Endothelial cell of umbilical vein (primary cell): ENCODE measurements at regions of chr12 and their contacts with region 1.

Region 1: GRCh38 chr12:76083904-76084862 is at the start of gene NAP1L1:
- DNase-seq: peak; percentile 97
- H3K4me3 ChIP-seq: peak within 1 kb of the TSS; percentile 76 to 99 (median 93)
- H3K27ac ChIP-seq: peak within 1 kb of the TSS; percentile 92
- H3K4me1 ChIP-seq: peaks cover 38% of the 10 kb centered on the region
- H3K27me3 ChIP-seq: no peaks in the 10 kb centered on the region
- CTCF ChIP-seq: peak in 1 of 2 donors; percentile 7
- POLR2A ChIP-seq: peak; percentile 87
- total RNA-seq, gene NAP1L1: 649 and 665 TPM in 2 replicates

Region 2: GRCh38 chr12:76049575-76050251 is 34.5 kb before region 1 on chr12:
- CTCF ChIA-PET with region 1: interaction called, 3 read pairs
- POLR2A ChIA-PET with region 1: no interaction called
- dilution Hi-C with region 1: no loop called
- intact Hi-C with region 1: loop called (anchors 2 kb)
- DNase-seq: no peak
- H3K4me3 ChIP-seq: no peak overlapping the region
- H3K27ac ChIP-seq: no peak overlapping the region
- H3K4me1 ChIP-seq: no peaks in the 10 kb centered on the region
- H3K27me3 ChIP-seq: no peaks in the 10 kb centered on the region
- CTCF ChIP-seq: no peak
- POLR2A ChIP-seq: no peak

Region 3: GRCh38 chr12:76060111-76060510 is 24.1 kb before region 1 on chr12:
- CTCF ChIA-PET with region 1: no interaction called
- POLR2A ChIA-PET with region 1: no interaction called
- dilution Hi-C with region 1: no loop called
- intact Hi-C with region 1: no loop called
- DNase-seq: no peak
- H3K4me3 ChIP-seq: no peak overlapping the region
- H3K27ac ChIP-seq: no peak overlapping the region
- H3K4me1 ChIP-seq: no peaks in the 10 kb centered on the region
- H3K27me3 ChIP-seq: no peaks in the 10 kb centered on the region
- CTCF ChIP-seq: no peak
- POLR2A ChIP-seq: no peak

Region 4: DNA sequence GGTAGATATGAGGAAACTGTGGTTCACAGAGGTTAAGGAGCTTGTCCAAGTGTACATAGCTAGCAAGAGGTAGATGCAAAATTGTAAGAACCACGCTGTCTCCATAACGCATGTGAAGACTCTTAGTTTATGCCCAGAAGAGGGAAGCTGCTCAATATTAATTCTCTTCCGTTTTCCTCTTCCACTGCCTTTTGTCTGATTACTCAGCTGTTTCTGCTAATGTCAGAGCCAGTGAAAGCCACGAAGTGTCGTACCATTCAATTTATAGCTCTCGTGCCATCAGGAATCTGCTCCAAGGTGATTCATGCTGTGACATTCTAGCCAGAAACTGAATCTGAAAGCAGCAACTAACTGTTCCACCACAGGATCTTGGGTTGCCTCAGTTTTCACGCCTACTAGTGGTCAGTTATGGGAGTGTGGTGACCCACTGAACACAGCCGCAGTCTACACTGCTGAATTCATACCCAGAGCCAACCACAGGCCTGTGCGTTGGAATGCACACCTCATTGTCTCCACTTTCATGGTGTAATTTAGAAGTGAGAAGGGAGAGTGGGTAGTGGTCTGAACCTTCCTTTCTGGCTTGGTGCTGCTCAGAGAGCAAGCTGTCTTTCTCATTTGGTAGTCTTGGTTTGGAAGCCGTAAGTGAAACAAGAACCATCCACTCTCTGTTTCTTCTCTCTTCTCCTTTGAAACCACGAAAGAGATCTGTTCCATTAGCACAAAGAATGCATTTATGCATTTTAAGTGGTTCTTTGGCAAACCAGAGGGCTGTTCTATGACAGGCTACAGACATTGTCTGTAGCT is 74.5 kb after region 1 on chr12:
- CTCF ChIA-PET with region 1: interaction called, 7 read pairs
- POLR2A ChIA-PET with region 1: no interaction called
- dilution Hi-C with region 1: no loop called
- intact Hi-C with region 1: loop called (anchors 1 kb)
- DNase-seq: peak; percentile 78
- H3K4me3 ChIP-seq: no peak overlapping the region
- H3K27ac ChIP-seq: no peak overlapping the region
- H3K4me1 ChIP-seq: peaks cover 4% of the 10 kb centered on the region
- H3K27me3 ChIP-seq: no peaks in the 10 kb centered on the region
- CTCF ChIP-seq: peak; percentile 74 to 77
- POLR2A ChIP-seq: no peak

Region 5: DNA sequence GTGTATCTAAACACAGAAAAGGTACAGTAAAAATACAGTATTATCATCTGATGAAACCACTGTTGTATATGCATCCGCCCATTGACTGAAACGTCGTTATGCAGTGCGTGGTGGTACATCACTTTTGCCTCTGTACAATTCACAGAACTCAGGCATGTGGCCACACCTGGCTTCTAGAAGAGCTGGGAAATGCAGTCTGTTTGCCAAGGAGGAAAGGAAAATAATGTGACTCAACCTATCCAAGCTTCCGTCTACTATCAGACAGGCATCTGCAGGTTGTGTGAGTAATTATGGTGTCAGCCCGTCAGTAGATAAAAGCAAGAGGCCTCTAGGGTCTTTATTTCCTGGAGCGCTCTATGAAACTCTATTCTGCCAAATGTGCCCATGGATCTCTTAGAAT is 152.4 kb after region 1 on chr12:
- CTCF ChIA-PET with region 1: no interaction called
- POLR2A ChIA-PET with region 1: no interaction called
- dilution Hi-C with region 1: no loop called
- intact Hi-C with region 1: loop called (anchors 1 kb)
- DNase-seq: peak; percentile 82
- H3K4me3 ChIP-seq: no peak overlapping the region
- H3K27ac ChIP-seq: peak overlapping the region; percentile 72
- H3K4me1 ChIP-seq: peaks cover 17% of the 10 kb centered on the region
- H3K27me3 ChIP-seq: no peaks in the 10 kb centered on the region
- CTCF ChIP-seq: no peak
- POLR2A ChIP-seq: peak; percentile 55

Region 6: GRCh38 chr12:76277480-76277879 is 193.3 kb after region 1 on chr12:
- CTCF ChIA-PET with region 1: no interaction called
- POLR2A ChIA-PET with region 1: interaction called, 3 read pairs
- dilution Hi-C with region 1: no loop called
- intact Hi-C with region 1: loop called (anchors 2 kb)
- DNase-seq: peak; percentile 54
- H3K4me3 ChIP-seq: no peak overlapping the region
- H3K27ac ChIP-seq: peak overlapping the region; percentile 87
- H3K4me1 ChIP-seq: peaks cover 45% of the 10 kb centered on the region
- H3K27me3 ChIP-seq: no peaks in the 10 kb centered on the region
- CTCF ChIP-seq: no peak
- POLR2A ChIP-seq: no peak